ENCODE measurements at regions of chr19 and their contacts with region 1.

Region 1: DNA sequence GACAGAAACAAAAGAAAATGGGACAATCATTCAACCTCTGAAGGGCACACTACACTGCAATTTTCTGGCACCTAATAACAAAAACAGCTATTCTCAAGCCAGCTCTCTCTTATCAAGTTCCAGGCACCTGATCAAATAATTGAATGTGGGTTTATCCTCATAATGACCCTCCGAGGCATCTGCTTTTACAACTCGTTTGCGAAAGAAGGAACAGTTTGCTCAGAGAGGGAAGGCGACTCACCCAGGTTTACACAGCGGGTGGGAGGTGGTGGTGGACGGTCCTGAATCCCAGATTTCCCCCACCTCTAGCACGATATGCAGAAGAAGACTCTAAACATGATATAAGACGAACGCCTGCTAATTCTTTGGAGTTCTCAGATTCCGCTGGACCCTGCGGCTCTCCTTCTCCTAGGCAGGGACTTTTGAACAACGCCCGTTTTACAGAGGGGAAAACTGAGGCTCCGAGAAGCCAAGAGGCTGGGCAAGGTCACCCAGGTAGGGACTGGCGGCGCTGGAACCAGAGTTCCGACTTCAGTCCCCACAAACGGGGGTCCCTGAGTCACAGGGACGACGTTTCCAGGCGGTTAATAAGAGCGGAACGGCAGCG is 641 bp downstream of the SGTA start:
- DNase-seq: peak in 1 of 3 donors; percentile 33
- H3K4me3 ChIP-seq: peak overlapping the region; percentile 72 to 99 (median 89)
- H3K27ac ChIP-seq: peak overlapping the region; percentile 92 to 96
- H3K4me1 ChIP-seq: peaks cover 14 to 47% (median 33%) of the 10 kb centered on the region in 4 experiments
- H3K27me3 ChIP-seq: no peaks in the 10 kb centered on the region

Region 2: GRCh38 chr19:2770055-2771013 is 12.1 kb before region 1 on chr19:
- CTCF ChIA-PET with region 1: interaction called, 26 read pairs
- POLR2A ChIA-PET with region 1: no interaction called
- DNase-seq: peak; percentile 64 to 94 (median 91)
- H3K4me3 ChIP-seq: peak overlapping the region in 3 of 7 experiments; percentile 43 to 57 (median 52)
- H3K27ac ChIP-seq: peak overlapping the region in 1 of 2 experiments; percentile 43
- H3K4me1 ChIP-seq: peaks cover 0 to 33% (median 32%) of the 10 kb centered on the region in 4 experiments
- H3K27me3 ChIP-seq: no peaks in the 10 kb centered on the region

Region 3: DNA sequence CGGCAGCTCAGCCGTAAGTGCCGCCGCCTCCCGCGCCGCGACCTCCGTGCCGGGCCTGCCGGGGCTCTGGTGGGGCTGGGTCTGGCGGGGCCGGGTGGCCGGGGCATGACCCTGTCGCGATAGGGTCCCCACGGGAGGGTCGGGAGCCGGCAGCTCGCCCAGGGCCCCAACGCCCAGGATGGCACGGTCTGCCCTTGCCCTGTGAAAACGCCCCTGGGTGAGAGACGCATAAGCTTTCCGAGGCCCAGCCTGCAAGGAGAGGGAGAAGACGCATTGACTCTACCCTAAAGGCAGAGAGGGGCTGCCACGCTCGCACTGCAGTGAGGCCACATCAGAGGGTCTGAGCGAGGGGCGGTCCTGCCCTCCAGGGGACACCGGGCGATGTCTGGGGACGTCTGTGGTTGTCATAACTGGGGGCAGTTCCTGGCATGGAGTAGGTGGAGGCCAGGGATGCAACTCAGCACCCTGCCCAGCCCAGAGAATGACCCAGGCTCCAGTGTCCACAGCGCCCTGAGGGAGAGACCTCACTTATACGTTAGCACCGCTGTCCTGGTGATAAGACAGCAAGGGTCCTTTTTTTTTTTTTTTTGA is 37.8 kb after region 1 on chr19:
- CTCF ChIA-PET with region 1: no interaction called
- POLR2A ChIA-PET with region 1: no interaction called
- DNase-seq: peak; percentile 24 to 56 (median 51)
- H3K4me3 ChIP-seq: peak overlapping the region; percentile 77 to 90 (median 80)
- H3K27ac ChIP-seq: peak overlapping the region; percentile 50 to 74
- H3K4me1 ChIP-seq: peaks cover 0 to 8% (median 4%) of the 10 kb centered on the region in 4 experiments
- H3K27me3 ChIP-seq: no peaks in the 10 kb centered on the region

Measured in common myeloid progenitor, CD34-positive (primary cell).